Upper lobe of right lung (tissue), 1 donor: ENCODE measurements at regions of chr18 and their contacts with region 1.

Region 1: DNA sequence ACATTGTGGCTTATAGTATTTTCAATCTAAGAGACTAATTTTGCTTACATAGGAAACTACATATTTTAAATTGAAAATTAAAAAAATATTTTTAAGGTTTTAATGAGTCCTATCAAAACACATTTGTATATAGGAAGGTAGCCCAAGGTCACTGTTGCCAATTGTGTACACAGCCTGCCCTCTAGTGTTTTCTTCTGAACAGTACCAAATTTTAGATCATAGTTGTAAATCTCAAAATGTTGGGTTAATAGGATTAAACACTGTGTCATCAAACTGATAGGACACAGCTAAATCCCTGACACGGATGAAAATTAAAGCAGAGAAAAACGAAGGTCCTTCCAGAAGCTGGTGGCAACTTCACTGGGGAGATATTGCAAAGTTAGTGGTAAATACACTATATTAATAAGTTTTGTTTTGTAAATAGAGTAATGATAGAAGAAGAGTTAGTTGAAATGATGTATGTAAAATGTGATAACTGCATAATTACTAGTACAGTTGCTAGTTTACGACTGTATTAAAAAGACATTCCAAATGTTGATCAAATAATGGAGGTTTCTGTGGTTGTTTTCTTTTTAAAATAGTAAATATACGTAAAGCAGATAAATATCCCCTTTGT is 19.7 kb downstream of the CLUL1 start:
- DNase-seq: no peak
- ATAC-seq: peak; percentile 81
- H3K4me3 ChIP-seq: no peak overlapping the region
- H3K27ac ChIP-seq: no peak overlapping the region
- H3K4me1 ChIP-seq: no peaks in the 10 kb centered on the region
- H3K27me3 ChIP-seq: no peaks in the 10 kb centered on the region
- CTCF ChIP-seq: peak; percentile 67

Region 2: GRCh38 chr18:293536-293935 is 323.0 kb before region 1 on chr18:
- intact Hi-C with region 1: loop called (anchors 10 kb)
- DNase-seq: no peak
- ATAC-seq: no peak
- H3K4me3 ChIP-seq: no peak overlapping the region
- H3K27ac ChIP-seq: no peak overlapping the region
- H3K4me1 ChIP-seq: no peaks in the 10 kb centered on the region
- H3K27me3 ChIP-seq: no peaks in the 10 kb centered on the region
- CTCF ChIP-seq: no peak

Region 3: DNA sequence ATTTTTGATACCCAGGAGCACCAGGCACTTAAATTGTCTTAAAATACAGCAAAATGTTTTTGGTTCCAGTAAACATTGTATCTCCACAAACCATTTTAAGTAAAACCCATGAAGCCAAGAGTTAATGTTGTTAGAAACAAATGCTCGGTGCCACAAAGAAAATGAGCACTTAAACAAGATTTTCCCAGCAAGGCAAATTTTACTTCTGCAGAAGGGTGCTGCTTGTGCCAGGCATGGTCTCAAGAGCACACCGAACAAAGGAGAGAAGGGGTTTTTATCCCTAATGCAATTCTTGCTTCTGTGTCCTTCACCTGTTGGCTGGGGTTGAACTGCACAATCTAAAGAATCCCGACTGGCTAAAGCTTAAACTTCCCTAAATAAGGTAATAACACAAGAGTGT is 574.9 kb after region 1 on chr18:
- intact Hi-C with region 1: no loop called
- DNase-seq: no peak
- ATAC-seq: no peak
- H3K4me3 ChIP-seq: no peak overlapping the region
- H3K27ac ChIP-seq: no peak overlapping the region
- H3K4me1 ChIP-seq: no peaks in the 10 kb centered on the region
- H3K27me3 ChIP-seq: no peaks in the 10 kb centered on the region
- CTCF ChIP-seq: no peak